Activated T-helper 2 cell treated with anti-CD3 and anti-CD28 coated beads, Interferon-gamma antibody, Interleukin-2, Interleukin-4, amounts not matched to agents 10 μg/mL and 5 μg/mL and 100 μg/mL, durations not matched to agents 14 hours and 24 hours and 36 hours (primary cell): ENCODE measurements at regions of chr1 and their contacts with region 1.

Region 1: DNA sequence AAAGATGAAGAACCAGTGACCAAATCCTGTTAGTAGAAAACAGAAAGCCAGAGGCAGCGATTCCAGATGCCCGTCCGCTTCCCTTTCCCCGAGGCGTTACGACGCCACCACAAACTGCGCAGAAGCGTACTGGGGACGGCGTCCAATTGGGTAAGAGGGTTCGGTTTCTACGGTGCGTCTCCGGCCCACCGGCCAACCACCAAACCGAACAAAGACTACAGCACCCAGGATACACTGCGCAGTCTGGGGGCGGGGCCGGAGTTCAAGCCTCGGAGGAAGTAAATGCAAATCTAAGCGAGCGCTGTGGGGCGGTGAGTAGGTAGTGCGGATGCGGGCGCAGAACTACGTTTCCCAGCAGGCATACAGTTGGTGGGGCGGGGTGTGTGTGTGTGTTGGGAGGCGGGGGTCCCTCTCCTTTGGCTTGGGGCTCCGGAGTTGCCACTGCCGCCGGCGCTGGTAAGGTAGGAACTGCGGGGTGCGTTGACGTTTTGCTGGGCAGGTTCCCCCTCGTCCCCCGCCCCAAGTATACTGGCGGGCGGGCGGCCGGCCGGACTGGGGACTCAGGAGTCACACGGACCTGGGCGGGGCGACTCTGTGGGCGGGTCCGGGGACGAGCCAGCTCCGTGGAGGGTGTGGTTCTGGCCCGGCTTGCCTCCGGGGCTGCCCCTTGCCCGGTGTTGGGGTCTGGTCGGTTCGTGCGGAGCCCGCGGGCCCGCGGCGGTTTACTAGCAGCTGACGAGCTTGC is at the starts of genes SWT1 and TRMT1L:
- DNase-seq: peak; percentile 98
- H3K4me3 Mint-ChIP-seq: peak within 1 kb of the TSS; percentile 95
- H3K27ac Mint-ChIP-seq: peak within 1 kb of the TSS; percentile 95
- H3K4me1 Mint-ChIP-seq: peaks cover 52% of the 10 kb centered on the region
- H3K27me3 Mint-ChIP-seq: no peaks in the 10 kb centered on the region
- total RNA-seq, gene SWT1: 2.1 and 2.7 TPM in 2 replicates
- total RNA-seq, gene TRMT1L: 25.9 and 28.7 TPM in 2 replicates

Region 2: DNA sequence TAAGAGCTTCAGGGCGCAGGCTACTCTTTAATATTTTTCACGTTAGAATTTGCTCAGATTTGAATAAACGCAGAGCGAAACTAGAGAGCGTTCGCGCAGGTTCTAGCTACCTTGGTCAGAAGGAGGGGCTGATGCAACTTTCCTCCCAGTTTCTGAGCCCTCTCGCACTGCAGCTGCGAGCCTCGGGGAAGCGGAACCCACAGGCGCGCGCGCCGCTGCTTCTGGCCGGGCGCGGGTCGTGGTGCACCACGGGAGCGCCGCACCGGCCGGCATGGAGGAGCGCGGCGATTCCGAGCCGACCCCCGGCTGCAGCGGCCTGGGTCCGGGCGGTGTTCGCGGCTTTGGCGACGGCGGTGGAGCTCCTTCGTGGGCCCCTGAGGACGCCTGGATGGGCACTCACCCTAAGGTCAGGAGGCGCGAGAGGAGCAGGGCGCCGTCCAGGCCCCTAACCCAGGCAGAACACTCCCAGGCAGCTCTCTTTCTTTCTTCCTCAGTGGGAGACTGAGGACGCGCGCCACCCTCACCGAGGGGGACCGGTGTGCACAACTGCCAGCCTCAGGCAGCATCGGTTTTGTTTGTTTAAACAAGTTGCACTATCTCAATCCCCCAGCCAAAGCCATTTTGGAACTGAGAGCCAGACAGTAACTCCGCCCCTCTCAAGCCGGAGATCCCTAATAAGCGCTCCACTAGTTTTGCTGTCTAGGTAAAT is 1105.4 kb before region 1 on chr1 and contains the start of gene TSEN15:
- intact Hi-C with region 1: loop called (anchors 5 kb)
- DNase-seq: peak; percentile 69
- H3K4me3 Mint-ChIP-seq: peak within 1 kb of the TSS; percentile 100
- H3K27ac Mint-ChIP-seq: peak within 1 kb of the TSS; percentile 96
- H3K4me1 Mint-ChIP-seq: peaks cover 30% of the 10 kb centered on the region
- H3K27me3 Mint-ChIP-seq: peaks cover 31% of the 10 kb centered on the region
- total RNA-seq, gene TSEN15: 35.1 TPM in 2 replicates

Region 3: GRCh38 chr1:184310157-184310806 is 846.7 kb before region 1 on chr1:
- intact Hi-C with region 1: no loop called
- DNase-seq: no peak
- H3K4me3 Mint-ChIP-seq: no peak overlapping the region
- H3K27ac Mint-ChIP-seq: no peak overlapping the region
- H3K4me1 Mint-ChIP-seq: no peaks in the 10 kb centered on the region
- H3K27me3 Mint-ChIP-seq: peaks cover 10% of the 10 kb centered on the region

Region 4: DNA sequence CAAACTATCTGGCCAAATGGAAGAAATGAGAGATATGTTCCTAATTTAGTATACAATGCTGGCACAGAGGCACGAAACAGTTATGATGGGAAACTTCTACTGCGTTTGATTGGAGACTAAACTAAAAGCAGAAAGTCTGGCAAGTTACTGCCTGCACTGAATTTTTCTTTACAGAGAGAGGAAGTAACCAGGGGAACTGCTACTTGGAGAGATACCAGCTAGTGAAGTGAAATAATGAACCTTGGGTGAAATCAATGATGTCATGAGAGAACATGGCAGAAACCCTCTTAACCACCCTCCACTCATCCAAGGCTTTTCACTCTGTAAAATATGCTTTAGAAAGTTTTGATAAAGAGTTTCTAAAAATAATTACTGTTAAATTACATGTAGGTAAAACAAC is 212.0 kb before region 1 on chr1:
- intact Hi-C with region 1: no loop called
- DNase-seq: no peak
- H3K4me3 Mint-ChIP-seq: no peak overlapping the region
- H3K27ac Mint-ChIP-seq: no peak overlapping the region
- H3K4me1 Mint-ChIP-seq: peaks cover 22% of the 10 kb centered on the region
- H3K27me3 Mint-ChIP-seq: peaks cover 1% of the 10 kb centered on the region

Region 5: GRCh38 chr1:184973272-184974055 is 183.6 kb before region 1 on chr1:
- intact Hi-C with region 1: loop called (anchors 2 kb)
- DNase-seq: no peak
- H3K4me3 Mint-ChIP-seq: peak overlapping the region; percentile 90
- H3K27ac Mint-ChIP-seq: peak overlapping the region; percentile 96
- H3K4me1 Mint-ChIP-seq: peaks cover 57% of the 10 kb centered on the region
- H3K27me3 Mint-ChIP-seq: peaks cover 13% of the 10 kb centered on the region

Region 6: DNA sequence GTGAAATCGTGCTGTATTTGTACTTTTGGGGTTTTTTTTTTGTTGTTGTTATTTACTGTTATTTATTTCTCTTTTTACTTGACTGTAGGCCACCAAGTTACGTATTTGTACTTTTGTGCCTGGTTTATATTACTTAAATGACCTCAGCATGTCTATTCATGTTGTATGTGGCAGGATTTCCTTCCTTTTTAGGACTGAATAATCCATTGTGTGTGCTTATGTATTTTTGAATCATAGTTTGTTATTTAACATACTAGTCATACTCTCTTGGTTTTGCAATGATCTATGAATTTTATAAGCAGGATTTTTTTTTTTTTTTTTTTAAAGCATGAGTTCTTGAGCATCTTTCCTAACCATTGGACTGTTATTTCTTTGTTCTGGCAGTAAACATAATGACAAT is 60.5 kb before region 1 on chr1:
- intact Hi-C with region 1: no loop called
- DNase-seq: no peak
- H3K4me3 Mint-ChIP-seq: no peak overlapping the region
- H3K27ac Mint-ChIP-seq: no peak overlapping the region
- H3K4me1 Mint-ChIP-seq: no peaks in the 10 kb centered on the region
- H3K27me3 Mint-ChIP-seq: no peaks in the 10 kb centered on the region

Region 7: DNA sequence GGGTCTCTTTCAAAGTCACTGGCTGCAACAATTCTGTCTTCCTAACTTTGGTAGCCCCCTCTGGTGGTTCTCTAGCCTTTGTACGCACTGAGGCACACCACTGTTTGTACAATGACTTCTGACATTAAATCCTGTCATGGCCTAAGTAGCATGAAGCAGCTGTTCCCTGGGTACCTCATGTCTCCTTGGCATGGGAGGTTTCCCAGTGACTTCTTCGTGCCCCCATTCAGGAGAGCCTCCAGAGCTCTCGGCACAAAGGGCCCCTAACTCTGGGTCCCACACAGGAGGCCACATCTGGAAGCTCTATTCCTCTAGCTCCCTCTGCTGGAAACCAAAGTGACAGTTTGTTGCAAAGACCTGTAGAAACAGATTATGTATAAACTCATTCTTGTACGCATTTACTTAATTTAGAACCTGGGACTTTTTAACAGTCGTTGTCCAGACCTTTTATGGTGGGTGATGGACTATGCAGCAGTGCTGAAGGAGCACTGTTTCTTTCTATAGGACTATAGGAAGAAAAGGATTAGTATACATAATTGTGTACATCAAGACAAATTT is 13.3 kb after region 1 on chr1:
- intact Hi-C with region 1: loop called (anchors 1 kb)
- DNase-seq: peak; percentile 32
- H3K4me3 Mint-ChIP-seq: no peak overlapping the region
- H3K27ac Mint-ChIP-seq: no peak overlapping the region
- H3K4me1 Mint-ChIP-seq: peaks cover 10% of the 10 kb centered on the region
- H3K27me3 Mint-ChIP-seq: no peaks in the 10 kb centered on the region

Region 8: GRCh38 chr1:185229981-185230380 is 73.0 kb after region 1 on chr1:
- intact Hi-C with region 1: no loop called
- DNase-seq: no peak
- H3K4me3 Mint-ChIP-seq: no peak overlapping the region
- H3K27ac Mint-ChIP-seq: no peak overlapping the region
- H3K4me1 Mint-ChIP-seq: no peaks in the 10 kb centered on the region
- H3K27me3 Mint-ChIP-seq: no peaks in the 10 kb centered on the region

Region 9: DNA sequence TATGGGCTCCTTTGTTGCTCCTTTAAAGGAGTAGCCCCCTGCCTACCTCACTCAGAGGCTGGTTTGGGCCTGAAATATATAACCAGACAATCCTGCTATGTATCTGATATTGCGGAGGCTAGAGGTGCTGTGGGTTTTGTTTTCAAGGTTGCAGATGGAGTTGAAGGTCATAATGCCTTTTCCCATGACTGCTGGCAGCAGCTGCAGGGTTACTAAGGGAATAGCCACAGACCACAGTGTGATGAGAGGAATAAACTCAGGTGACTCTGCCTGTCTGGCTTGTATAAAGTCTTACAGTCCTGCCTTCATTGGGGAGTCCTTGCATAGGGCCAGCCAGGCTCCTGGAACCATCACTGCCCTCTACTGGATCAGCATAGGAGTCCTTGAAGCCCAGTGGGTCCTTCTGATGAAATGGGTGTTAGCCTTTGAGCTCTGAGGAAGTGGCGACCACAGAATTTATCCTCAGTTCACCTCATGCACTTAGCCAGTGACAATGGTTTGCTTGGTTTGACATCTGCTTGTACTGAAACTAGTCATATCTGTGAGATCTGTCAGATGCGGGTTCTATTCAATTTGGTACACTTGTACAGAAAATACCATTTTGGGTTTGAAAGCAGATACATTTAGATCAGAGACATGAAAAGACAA is 402.8 kb after region 1 on chr1:
- intact Hi-C with region 1: loop called (anchors 1 kb)
- DNase-seq: peak; percentile 75
- H3K4me3 Mint-ChIP-seq: peak overlapping the region; percentile 5
- H3K27ac Mint-ChIP-seq: peak overlapping the region; percentile 71
- H3K4me1 Mint-ChIP-seq: peaks cover 51% of the 10 kb centered on the region
- H3K27me3 Mint-ChIP-seq: no peaks in the 10 kb centered on the region